GM12878 (cell line): ENCODE measurements at regions of chr9 and their contacts with region 1.

Region 1: GRCh38 chr9:125200210-125201047 is at the start of gene RABEPK:
- DNase-seq: peak; percentile 60
- ATAC-seq: peak; percentile 99
- H3K4me3 ChIP-seq: peak within 1 kb of the TSS; percentile 99
- H3K27ac ChIP-seq: peak within 1 kb of the TSS; percentile 81
- H3K4me1 ChIP-seq: peaks cover 3% of the 10 kb centered on the region
- H3K27me3 ChIP-seq: no peaks in the 10 kb centered on the region; a peak in 1 of 4 replicates
- CTCF ChIP-seq: no peak
- EP300 ChIP-seq: no peak
- POLR2A ChIP-seq: peak; percentile 92
- RAD21 ChIP-seq: no peak
- polyA plus RNA-seq, gene RABEPK: 41.7 to 59.8 TPM

Region 2: DNA sequence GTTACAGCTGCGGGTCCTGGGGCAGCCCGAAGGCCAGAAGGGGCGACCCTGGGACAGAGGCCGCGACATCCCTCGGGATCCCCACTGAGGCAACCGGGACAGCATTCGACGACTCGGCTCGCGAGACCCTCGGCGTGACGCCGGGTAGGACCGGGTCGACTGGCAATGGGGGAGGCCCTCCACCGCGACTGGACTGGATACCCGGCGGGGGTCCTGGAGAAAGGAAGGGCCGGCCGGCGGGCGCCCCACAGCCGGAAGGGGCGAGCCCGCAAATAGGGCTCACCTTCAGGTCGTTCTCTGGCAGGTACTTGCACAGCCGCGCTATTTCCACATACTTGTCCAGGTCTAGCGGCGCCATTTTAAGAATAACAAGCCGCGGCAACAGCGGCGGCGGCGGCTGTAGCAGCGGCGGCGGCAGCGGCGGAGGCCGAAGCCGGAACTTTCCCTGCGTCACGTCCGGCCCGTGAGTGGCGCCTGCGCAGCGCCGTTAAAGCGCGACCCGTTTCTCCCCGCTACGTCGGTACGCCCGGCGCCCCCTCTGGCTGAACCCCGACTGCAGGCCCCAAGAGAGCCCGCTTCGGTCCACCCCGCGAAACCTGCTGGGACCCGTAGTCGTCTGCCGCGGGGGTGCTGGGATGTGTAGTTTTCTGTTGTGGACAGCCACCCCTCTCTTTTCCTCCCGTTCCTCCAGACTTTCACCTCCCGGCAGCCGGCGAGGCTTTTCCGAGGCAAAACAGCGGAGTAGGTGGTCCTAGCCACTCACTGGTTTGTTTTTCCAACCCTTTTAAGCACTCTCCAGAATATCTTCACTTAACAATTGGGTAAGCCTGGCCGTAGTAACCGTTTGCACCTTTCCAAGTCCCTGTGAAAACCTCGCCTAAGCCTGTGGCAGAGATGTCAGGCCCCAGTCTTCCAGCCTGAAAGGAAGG is 10.8 kb before region 1 on chr9 and contains the start of gene PPP6C:
- CTCF ChIA-PET with region 1: interaction called, 3 read pairs
- POLR2A ChIA-PET with region 1: interaction called, 9 read pairs
- RAD21 ChIA-PET with region 1: no interaction called
- SMC1A ChIA-PET with region 1: interaction called, 5 read pairs
- in situ Hi-C with region 1: no loop called
- intact Hi-C with region 1: loop called (anchors 1 kb)
- DNase-seq: peak; percentile 76
- ATAC-seq: peak; percentile 97
- H3K4me3 ChIP-seq: peak within 1 kb of the TSS; percentile 93
- H3K27ac ChIP-seq: peak within 1 kb of the TSS; percentile 89
- H3K4me1 ChIP-seq: peaks cover 4% of the 10 kb centered on the region
- H3K27me3 ChIP-seq: no peaks in the 10 kb centered on the region
- CTCF ChIP-seq: peak; percentile 68 to 84 (median 75)
- EP300 ChIP-seq: peak in 1 of 2 experiments; percentile 39; a peak in 1 of 4 replicates
- POLR2A ChIP-seq: peak; percentile 75
- RAD21 ChIP-seq: 0 out of 2 replicates have a peak, but pooled peaks have one; percentile 14
- polyA plus RNA-seq, gene PPP6C: 26.8 to 33.8 TPM